ENCODE measurements at regions of chr12 and their contacts with region 1.

Region 1: DNA sequence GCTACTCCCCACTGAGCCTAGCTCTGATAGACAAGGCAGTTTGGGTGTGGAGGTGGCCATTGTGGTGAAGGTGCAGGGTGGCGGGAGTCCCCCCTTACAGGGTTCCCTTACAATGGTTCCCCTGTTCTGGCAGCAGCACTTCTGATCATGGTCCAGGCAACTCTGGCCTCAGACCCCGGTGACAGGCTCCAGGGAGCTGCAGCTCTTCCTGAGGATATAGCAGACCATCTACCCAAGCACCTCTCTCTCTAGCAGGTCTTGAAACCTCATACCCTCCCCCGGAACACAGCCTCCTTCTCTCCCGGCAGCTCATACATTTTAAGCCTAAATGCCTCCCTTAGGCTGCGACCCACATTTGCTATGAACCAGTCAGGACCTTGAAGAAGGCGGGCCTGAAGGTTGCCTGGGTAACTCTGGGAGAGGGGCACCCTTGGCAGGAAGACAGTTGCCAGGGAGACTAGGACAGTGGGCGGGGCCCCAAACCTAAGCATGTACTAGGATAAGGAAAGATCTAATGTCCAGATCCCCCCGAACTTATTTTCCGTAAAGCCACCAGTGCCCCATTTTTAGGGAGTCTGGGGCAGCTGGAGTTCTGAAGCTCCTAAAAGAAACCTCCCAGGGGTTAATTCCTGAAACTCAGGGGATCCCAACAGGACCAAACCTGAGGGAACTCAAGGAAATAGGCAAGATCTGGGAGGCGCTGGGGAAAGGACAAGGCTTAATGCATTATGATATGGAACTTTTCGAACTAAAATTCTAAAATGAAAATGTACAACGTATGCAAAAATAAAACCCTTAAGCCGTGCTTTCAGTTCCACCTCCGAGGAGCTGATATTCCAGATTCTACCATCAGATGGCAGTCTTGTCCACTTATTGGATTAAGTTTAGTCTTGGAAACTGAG is 4.5 kb upstream of the GDF11 start:
- DNase-seq: peak; percentile 90
- ATAC-seq: peak; percentile 73
- H3K4me3 Mint-ChIP-seq: peak overlapping the region; percentile 82
- H3K27ac Mint-ChIP-seq: peak overlapping the region; percentile 86
- H3K4me1 Mint-ChIP-seq: peaks cover 43% of the 10 kb centered on the region
- H3K27me3 Mint-ChIP-seq: peaks cover 7% of the 10 kb centered on the region

Region 2: DNA sequence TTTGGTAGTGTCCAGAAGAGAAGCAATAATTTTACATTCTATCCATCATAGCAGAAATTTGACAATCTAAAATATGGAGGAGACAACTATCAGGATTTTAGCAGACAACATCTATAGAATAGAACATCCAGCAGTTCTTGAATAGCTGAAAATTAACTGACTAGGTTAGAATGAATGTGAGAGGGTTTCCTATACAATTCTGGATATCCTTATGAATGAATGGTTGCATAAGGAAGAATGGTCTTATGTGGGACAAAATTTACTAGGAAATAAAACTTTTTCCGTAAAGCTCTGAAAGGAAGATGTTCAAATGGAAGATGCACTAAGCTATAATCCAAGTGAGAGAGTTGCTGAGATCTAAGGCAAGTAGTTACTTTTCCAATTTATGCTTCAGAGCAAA is 407.9 kb before region 1 on chr12 and contains the start of gene OR6C3:
- CTCF ChIA-PET with region 1: no interaction called
- POLR2A ChIA-PET with region 1: no interaction called
- DNase-seq: no peak
- ATAC-seq: no peak
- H3K4me3 Mint-ChIP-seq: no peak within 1 kb of the TSS
- H3K27ac Mint-ChIP-seq: no peak within 1 kb of the TSS
- H3K4me1 Mint-ChIP-seq: no peaks in the 10 kb centered on the region
- H3K27me3 Mint-ChIP-seq: peaks cover 5% of the 10 kb centered on the region
- total RNA-seq, gene OR6C3: not detected

Region 3: GRCh38 chr12:55715833-55716581 is 22.4 kb before region 1 on chr12 and contains the start of gene BLOC1S1:
- CTCF ChIA-PET with region 1: interaction called, 170 read pairs
- POLR2A ChIA-PET with region 1: interaction called, 10 read pairs
- DNase-seq: peak; percentile 95
- ATAC-seq: peak; percentile 95
- H3K4me3 Mint-ChIP-seq: peak within 1 kb of the TSS; percentile 97
- H3K27ac Mint-ChIP-seq: peak within 1 kb of the TSS; percentile 96
- H3K4me1 Mint-ChIP-seq: peaks cover 54% of the 10 kb centered on the region
- H3K27me3 Mint-ChIP-seq: peaks cover 17% of the 10 kb centered on the region
- total RNA-seq, gene BLOC1S1: 156 to 158 TPM

Region 4: DNA sequence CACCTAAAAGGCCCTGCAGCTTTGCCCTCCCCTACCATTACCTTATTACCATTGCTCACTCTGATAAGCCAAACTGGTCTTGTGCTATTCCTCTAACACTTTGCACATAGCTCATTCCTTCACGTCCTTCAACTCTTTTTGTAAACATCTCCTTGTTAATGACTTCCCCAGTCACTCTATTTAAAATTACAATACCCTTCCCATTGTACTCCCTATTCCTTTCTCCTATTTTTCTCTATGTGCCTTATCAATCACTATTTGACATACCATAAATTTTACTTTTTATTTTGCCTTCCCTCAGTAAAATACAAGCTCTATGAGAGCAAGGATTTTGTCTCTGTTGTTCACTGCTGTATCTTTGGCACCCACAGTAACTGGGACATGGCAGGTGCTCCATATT is 73.7 kb after region 1 on chr12:
- CTCF ChIA-PET with region 1: interaction called, 56 read pairs
- POLR2A ChIA-PET with region 1: interaction called, 7 read pairs
- DNase-seq: no peak
- ATAC-seq: no peak
- H3K4me3 Mint-ChIP-seq: no peak overlapping the region
- H3K27ac Mint-ChIP-seq: no peak overlapping the region
- H3K4me1 Mint-ChIP-seq: peaks cover 41% of the 10 kb centered on the region
- H3K27me3 Mint-ChIP-seq: no peaks in the 10 kb centered on the region

Region 5: DNA sequence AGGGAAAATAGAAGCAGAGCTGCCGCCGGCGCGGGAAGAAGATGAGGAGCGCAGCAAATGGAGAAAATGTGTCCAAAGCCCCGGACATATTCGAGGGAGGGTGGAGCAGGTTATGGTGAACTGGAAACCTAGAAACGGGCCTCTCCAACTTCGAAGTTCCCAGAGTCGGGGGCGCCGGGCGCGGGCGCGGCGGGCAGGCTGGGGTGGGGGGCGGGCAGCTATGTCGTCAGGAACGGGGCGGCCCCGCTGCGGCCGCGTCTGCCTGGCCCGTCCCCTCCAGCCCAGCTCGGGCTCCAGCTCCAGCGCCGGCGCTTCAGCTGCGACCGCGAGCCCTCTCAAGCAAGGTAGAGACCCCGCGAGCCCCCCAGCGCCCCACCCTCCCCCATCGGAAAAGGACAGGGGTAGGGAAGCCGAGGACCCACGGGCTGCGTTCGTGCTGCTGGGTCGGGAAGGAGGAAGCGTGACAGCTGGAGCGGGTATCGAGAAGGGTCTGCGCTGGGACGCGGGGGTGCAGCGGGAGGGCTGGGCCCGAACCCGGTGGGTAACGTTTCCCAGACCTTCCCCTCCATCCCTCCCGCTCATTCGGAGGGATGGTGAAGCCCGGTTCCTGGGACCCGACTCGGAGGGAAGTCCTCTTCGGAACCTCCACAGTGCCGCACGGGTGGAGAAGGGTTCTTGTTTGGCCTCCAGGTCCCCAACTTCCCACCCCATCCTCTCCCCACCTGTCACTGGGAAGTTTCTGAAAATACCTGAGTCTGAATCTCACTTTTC is 193.6 kb after region 1 on chr12:
- CTCF ChIA-PET with region 1: interaction called, 35 read pairs
- POLR2A ChIA-PET with region 1: interaction called, 6 read pairs
- DNase-seq: peak; percentile 42
- ATAC-seq: no peak
- H3K4me3 Mint-ChIP-seq: peak overlapping the region; percentile 95
- H3K27ac Mint-ChIP-seq: peak overlapping the region; percentile 99
- H3K4me1 Mint-ChIP-seq: peaks cover 53% of the 10 kb centered on the region
- H3K27me3 Mint-ChIP-seq: no peaks in the 10 kb centered on the region

Region 6: GRCh38 chr12:56007564-56008559 is 269.5 kb after region 1 on chr12:
- CTCF ChIA-PET with region 1: interaction called, 16 read pairs
- POLR2A ChIA-PET with region 1: no interaction called
- DNase-seq: peak; percentile 71
- ATAC-seq: peak; percentile 87
- H3K4me3 Mint-ChIP-seq: peak overlapping the region; percentile 82
- H3K27ac Mint-ChIP-seq: peak overlapping the region; percentile 86
- H3K4me1 Mint-ChIP-seq: peaks cover 29% of the 10 kb centered on the region
- H3K27me3 Mint-ChIP-seq: no peaks in the 10 kb centered on the region

Region 7: DNA sequence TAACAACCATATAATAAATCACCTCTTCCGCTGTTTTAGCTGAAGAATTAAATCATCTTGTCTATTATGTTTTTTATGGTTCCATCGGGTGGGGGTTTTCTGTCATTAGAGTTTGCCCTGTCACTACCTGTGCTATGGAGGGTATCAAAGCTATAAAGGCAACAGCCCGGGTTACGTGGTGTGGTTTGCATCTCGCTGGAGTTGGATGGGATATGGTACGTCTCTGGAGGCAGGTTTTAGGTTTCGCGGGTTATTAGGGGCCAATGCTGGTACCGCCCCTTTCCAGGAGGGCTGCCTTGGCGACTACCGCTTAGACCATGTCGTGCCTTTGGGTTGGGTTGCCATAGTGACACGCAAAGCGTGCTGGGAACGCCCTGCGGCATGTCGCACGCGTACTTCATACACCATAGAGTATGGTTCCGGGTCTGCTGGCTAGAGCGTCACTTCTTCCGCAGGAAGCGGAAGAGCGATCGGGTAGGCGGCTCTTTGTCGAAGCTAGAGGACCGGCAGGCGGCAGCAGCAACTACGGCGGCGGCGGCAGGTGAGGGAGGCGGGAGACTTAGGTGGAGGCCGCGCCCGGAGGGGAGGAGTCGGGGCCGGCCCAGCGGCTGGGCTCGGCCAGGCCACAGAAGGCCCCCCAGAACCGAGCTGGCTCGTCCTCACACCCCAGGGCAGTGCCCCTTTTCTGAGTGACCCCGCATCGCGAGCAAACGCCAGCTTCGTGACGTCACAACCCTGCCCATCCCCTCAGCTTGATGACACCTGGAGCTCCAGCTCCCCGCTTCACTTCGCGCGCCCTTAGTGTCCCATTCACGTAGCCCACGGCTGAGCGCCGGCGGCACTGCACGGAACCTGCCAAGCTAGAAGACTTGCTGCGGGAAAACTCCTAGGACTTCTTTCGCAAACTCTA is 379.7 kb after region 1 on chr12 and contains the start of gene ZC3H10:
- CTCF ChIA-PET with region 1: interaction called, 21 read pairs
- POLR2A ChIA-PET with region 1: interaction called, 5 read pairs
- DNase-seq: peak; percentile 100
- ATAC-seq: peak; percentile 76
- H3K4me3 Mint-ChIP-seq: peak within 1 kb of the TSS; percentile 100
- H3K27ac Mint-ChIP-seq: peak within 1 kb of the TSS; percentile 100
- H3K4me1 Mint-ChIP-seq: peaks cover 39% of the 10 kb centered on the region
- H3K27me3 Mint-ChIP-seq: no peaks in the 10 kb centered on the region
- total RNA-seq, gene ZC3H10: 9.1 to 10.6 TPM

Measured in activated CD8-positive, alpha-beta T cell treated with anti-CD3 and anti-CD28 coated beads, Interleukin-2, amount 10 ng/mL, durations not matched to agents 7 days and 5 days (primary cell).